Activated CD4-positive, alpha-beta memory T cell treated with anti-CD3 and anti-CD28 coated beads for 36 hours (primary cell): ENCODE measurements at regions of chr16 and their contacts with region 1.

Region 1: DNA sequence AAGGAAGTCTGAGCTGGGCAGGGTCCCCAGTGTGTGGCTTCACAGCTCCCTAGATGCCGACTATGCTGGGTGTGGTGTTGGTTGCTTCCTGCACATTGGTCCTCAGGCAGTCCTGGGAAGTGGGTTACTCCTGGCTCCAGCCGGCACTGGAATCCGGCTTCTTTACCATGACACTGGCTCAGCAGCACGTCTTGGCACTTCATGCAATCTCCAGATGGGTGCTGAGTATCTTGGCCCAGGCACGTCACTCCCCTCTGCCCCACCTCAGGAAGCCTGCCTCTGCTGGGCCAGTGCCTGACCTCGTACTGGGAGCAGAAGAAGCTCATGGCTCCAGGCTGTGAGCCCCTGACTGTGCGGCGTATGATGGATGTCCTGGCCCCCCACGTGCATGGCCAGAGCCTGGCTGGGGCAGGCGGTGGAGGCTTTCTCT is 24.5 kb downstream of the FCSK start:
- DNase-seq: no peak
- H3K4me3 Mint-ChIP-seq: no peak overlapping the region
- H3K27ac Mint-ChIP-seq: peak overlapping the region; percentile 28
- H3K4me1 Mint-ChIP-seq: peaks cover 25% of the 10 kb centered on the region
- H3K27me3 Mint-ChIP-seq: no peaks in the 10 kb centered on the region

Region 2: GRCh38 chr16:70495425-70496182 is 16.7 kb after region 1 on chr16:
- CTCF ChIA-PET with region 1: interaction called, 4 read pairs
- POLR2A ChIA-PET with region 1: interaction called, 12 read pairs
- intact Hi-C with region 1: loop called (anchors 1 kb)
- DNase-seq: no peak
- H3K4me3 Mint-ChIP-seq: no peak overlapping the region
- H3K27ac Mint-ChIP-seq: no peak overlapping the region
- H3K4me1 Mint-ChIP-seq: peaks cover 26% of the 10 kb centered on the region
- H3K27me3 Mint-ChIP-seq: no peaks in the 10 kb centered on the region

Region 3: GRCh38 chr16:70691223-70692129 is 212.5 kb after region 1 on chr16:
- CTCF ChIA-PET with region 1: no interaction called
- POLR2A ChIA-PET with region 1: no interaction called
- intact Hi-C with region 1: no loop called
- DNase-seq: no peak
- H3K4me3 Mint-ChIP-seq: no peak overlapping the region
- H3K27ac Mint-ChIP-seq: no peak overlapping the region
- H3K4me1 Mint-ChIP-seq: no peaks in the 10 kb centered on the region
- H3K27me3 Mint-ChIP-seq: peaks cover 3% of the 10 kb centered on the region